BJ (cell line): ENCODE measurements at regions of chr1 and their contacts with region 1.

Region 1: GRCh38 chr1:171644805-171645483 is 7.5 kb downstream of the MYOC start:
- DNase-seq: peak; percentile 55
- H3K4me3 ChIP-seq: no peak overlapping the region
- H3K27me3 ChIP-seq: no peaks in the 10 kb centered on the region; the same call in 1 of the 2 replicates
- CTCF ChIP-seq: peak; percentile 86

Region 2: GRCh38 chr1:170959385-170959784 is 685.6 kb before region 1 on chr1:
- CTCF ChIA-PET with region 1: no interaction called
- POLR2A ChIA-PET with region 1: no interaction called
- DNase-seq: peak; percentile 12
- H3K4me3 ChIP-seq: no peak overlapping the region
- H3K27me3 ChIP-seq: no peaks in the 10 kb centered on the region
- CTCF ChIP-seq: no peak

Region 3: GRCh38 chr1:171628225-171628624 is 16.7 kb before region 1 on chr1:
- CTCF ChIA-PET with region 1: interaction called, 40 read pairs
- POLR2A ChIA-PET with region 1: interaction called, 4 read pairs
- DNase-seq: no peak
- H3K4me3 ChIP-seq: no peak overlapping the region
- H3K27me3 ChIP-seq: peaks cover 4% of the 10 kb centered on the region; the same call in 1 of the 2 replicates
- CTCF ChIP-seq: no peak

Region 4: GRCh38 chr1:171663854-171664575 is 19.1 kb after region 1 on chr1:
- CTCF ChIA-PET with region 1: interaction called, 49 read pairs
- POLR2A ChIA-PET with region 1: no interaction called
- DNase-seq: no peak
- H3K4me3 ChIP-seq: no peak overlapping the region
- H3K27me3 ChIP-seq: no peaks in the 10 kb centered on the region
- CTCF ChIP-seq: no peak

Region 5: DNA sequence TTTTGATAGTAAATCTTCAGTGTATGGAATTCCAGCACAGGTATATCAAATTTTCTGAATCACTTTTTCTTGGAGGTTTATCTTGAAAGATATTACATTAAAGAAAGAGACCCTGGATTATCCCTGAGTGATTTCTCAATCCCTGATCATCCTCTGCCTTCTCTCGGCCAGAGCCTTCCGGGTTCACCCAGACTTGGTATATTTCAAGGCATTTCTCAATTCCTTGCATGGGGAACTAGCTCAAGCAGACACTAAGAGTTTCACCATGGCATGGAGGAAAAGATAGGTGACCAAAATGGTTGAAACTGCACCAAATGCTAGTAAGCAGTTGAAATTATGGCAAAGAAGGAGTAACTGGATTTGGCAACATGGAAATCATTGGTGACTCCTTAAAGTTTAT is 91.3 kb after region 1 on chr1:
- CTCF ChIA-PET with region 1: interaction called, 15 read pairs
- POLR2A ChIA-PET with region 1: interaction called, 3 read pairs
- DNase-seq: no peak
- H3K4me3 ChIP-seq: no peak overlapping the region
- H3K27me3 ChIP-seq: no peaks in the 10 kb centered on the region
- CTCF ChIP-seq: no peak

Region 6: DNA sequence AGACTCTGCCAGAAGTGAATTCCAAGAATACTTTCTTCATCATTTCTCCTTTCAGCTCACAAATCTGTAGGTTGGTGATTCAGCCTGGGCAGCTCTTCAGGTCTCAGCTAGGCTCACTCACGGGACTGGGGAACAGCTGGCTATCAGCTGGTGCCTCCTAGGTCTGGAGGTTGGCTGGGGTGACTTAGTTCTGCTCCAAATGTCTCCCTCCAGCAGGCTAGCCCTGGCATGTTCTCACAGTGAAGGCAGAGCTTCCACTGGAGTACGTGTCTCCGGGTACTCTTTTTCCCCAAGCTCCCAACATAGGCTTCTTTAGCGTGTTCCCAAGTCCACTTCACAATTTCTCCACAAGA is 109.4 kb after region 1 on chr1:
- CTCF ChIA-PET with region 1: interaction called, 16 read pairs
- POLR2A ChIA-PET with region 1: no interaction called
- DNase-seq: peak; percentile 59
- H3K4me3 ChIP-seq: no peak overlapping the region
- H3K27me3 ChIP-seq: no peaks in the 10 kb centered on the region
- CTCF ChIP-seq: no peak

Region 7: GRCh38 chr1:171858696-171859095 is 213.8 kb after region 1 on chr1:
- CTCF ChIA-PET with region 1: no interaction called
- POLR2A ChIA-PET with region 1: no interaction called
- DNase-seq: no peak
- H3K4me3 ChIP-seq: no peak overlapping the region
- H3K27me3 ChIP-seq: no peaks in the 10 kb centered on the region
- CTCF ChIP-seq: no peak

Region 8: GRCh38 chr1:171984850-171985485 is 340.0 kb after region 1 on chr1:
- CTCF ChIA-PET with region 1: interaction called, 118 read pairs
- POLR2A ChIA-PET with region 1: no interaction called
- DNase-seq: no peak
- H3K4me3 ChIP-seq: no peak overlapping the region
- H3K27me3 ChIP-seq: no peaks in the 10 kb centered on the region
- CTCF ChIP-seq: peak; percentile 74